ENCODE measurements at regions of chr2 and their contacts with region 1.

Region 1: DNA sequence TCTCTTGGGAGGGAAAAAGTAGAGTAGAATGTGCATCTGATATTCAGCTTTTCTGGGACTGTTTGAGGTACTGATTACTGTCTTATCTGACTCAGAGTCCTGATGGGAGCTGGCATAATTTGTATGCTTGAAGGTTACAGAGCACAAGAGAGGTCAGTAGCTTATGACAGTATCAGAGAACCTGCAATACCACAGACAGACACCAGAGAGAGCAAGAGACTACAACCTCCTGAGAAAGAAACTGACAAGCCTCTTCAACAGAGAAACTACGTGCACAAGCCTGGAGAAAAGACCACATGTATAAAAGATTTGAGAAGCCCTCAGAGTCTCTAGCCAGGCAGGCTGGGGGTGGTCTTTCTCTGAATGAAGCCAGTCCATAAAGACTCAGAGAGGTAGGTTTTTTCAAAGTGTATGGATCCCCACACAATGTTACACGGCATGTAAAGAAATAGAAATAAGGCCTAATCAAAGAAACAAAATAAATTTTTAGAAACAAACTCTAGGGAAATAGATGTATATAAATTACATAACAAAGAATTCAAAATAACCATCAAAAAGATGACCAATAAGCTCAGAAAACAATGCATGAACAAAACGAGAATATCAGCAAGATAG is 568.3 kb downstream of the LRRTM4 start:
- DNase-seq: peak; percentile 68
- ATAC-seq: peak; percentile 98
- H3K4me3 ChIP-seq: no peak overlapping the region
- H3K27ac ChIP-seq: no peak overlapping the region
- H3K4me1 ChIP-seq: no peaks in the 10 kb centered on the region
- H3K27me3 ChIP-seq: no peaks in the 10 kb centered on the region
- CTCF ChIP-seq: peak; percentile 88
- EP300 ChIP-seq: no peak
- POLR2A ChIP-seq: no peak
- RAD21 ChIP-seq: peak; percentile 81

Region 2: GRCh38 chr2:76584474-76584873 is 369.4 kb before region 1 on chr2:
- CTCF ChIA-PET with region 1: no interaction called
- POLR2A ChIA-PET with region 1: no interaction called
- in situ Hi-C with region 1: no loop called
- intact Hi-C with region 1: no loop called
- DNase-seq: no peak
- ATAC-seq: no peak
- H3K4me3 ChIP-seq: no peak overlapping the region
- H3K27ac ChIP-seq: no peak overlapping the region
- H3K4me1 ChIP-seq: no peaks in the 10 kb centered on the region
- H3K27me3 ChIP-seq: no peaks in the 10 kb centered on the region
- CTCF ChIP-seq: no peak
- EP300 ChIP-seq: no peak
- POLR2A ChIP-seq: no peak
- RAD21 ChIP-seq: no peak

Region 3: DNA sequence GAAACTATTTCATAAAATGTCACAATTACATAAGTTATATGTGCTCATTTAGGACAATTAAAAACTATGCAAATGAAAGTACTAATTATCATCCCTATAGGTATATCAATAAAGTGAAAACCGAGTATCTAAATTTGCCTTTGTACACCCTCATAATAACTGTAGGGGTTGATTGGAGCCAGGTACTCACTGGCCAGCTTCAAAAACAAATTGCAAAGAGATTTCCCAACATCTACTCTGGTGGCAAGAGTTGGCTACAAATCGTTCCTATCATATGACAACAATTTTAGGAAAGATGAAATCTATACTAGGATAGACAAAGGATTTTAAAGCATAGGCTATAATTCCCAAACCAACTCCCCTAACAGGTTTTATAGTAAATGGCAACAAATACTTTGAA is 11.9 kb after region 1 on chr2:
- CTCF ChIA-PET with region 1: no interaction called
- POLR2A ChIA-PET with region 1: no interaction called
- in situ Hi-C with region 1: no loop called
- intact Hi-C with region 1: no loop called
- DNase-seq: no peak
- ATAC-seq: no peak
- H3K4me3 ChIP-seq: no peak overlapping the region
- H3K27ac ChIP-seq: no peak overlapping the region
- H3K4me1 ChIP-seq: no peaks in the 10 kb centered on the region
- H3K27me3 ChIP-seq: no peaks in the 10 kb centered on the region
- CTCF ChIP-seq: no peak
- EP300 ChIP-seq: no peak
- POLR2A ChIP-seq: no peak
- RAD21 ChIP-seq: no peak

Region 4: DNA sequence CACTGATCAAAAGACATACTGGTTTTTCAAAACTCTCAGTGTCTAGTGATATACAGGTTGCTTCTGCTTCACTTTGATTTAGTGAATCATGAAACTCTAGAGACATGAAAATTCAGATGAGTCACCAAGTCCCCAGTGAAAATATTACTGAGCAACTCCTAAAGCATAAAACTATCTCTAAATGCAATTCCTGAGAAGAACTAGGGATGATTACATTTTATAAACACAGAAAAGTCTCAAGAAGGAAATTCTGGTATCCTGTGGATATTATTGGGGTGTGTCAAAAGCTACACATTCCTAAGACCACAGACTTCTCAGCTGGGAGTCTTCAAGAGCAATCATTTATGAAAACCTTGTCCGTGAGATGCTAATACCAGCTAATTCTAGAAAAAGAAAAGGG is 558.7 kb after region 1 on chr2:
- CTCF ChIA-PET with region 1: no interaction called
- POLR2A ChIA-PET with region 1: no interaction called
- in situ Hi-C with region 1: no loop called
- intact Hi-C with region 1: loop called (anchors 10 kb)
- DNase-seq: no peak
- ATAC-seq: no peak
- H3K4me3 ChIP-seq: no peak overlapping the region
- H3K27ac ChIP-seq: no peak overlapping the region
- H3K4me1 ChIP-seq: no peaks in the 10 kb centered on the region
- H3K27me3 ChIP-seq: no peaks in the 10 kb centered on the region
- CTCF ChIP-seq: no peak
- EP300 ChIP-seq: no peak
- POLR2A ChIP-seq: no peak
- RAD21 ChIP-seq: no peak

Region 5: GRCh38 chr2:77977471-77978063 is 1023.7 kb after region 1 on chr2:
- CTCF ChIA-PET with region 1: no interaction called
- POLR2A ChIA-PET with region 1: no interaction called
- in situ Hi-C with region 1: no loop called
- intact Hi-C with region 1: loop called (anchors 5 kb)
- DNase-seq: no peak
- ATAC-seq: peak; percentile 58
- H3K4me3 ChIP-seq: no peak overlapping the region
- H3K27ac ChIP-seq: no peak overlapping the region
- H3K4me1 ChIP-seq: no peaks in the 10 kb centered on the region
- H3K27me3 ChIP-seq: no peaks in the 10 kb centered on the region
- CTCF ChIP-seq: peak; percentile 23
- EP300 ChIP-seq: no peak
- POLR2A ChIP-seq: no peak
- RAD21 ChIP-seq: no peak

Region 6: DNA sequence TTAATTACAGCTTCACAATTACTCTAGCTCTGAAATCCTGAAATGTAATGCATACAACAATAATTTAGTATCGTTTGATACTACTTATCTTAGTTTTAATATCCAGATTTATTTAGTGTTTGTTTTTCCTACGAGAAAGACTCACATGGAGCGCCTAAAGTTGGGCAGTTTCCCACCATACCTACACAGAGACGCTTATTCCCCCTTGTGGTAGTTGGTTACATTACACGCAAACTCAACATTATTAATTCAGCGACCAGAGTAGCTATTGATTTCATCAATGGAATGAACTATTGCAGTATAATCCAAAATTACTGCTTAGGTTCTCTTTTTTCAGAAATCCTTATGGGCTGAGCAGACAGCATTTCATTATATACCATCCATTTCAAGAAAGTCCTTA is 1907.7 kb after region 1 on chr2:
- CTCF ChIA-PET with region 1: interaction called, 5 read pairs
- POLR2A ChIA-PET with region 1: no interaction called
- in situ Hi-C with region 1: loop called (anchors 25 kb)
- intact Hi-C with region 1: loop called (anchors 1 kb)
- DNase-seq: peak; percentile 51
- ATAC-seq: peak; percentile 94
- H3K4me3 ChIP-seq: no peak overlapping the region
- H3K27ac ChIP-seq: no peak overlapping the region
- H3K4me1 ChIP-seq: no peaks in the 10 kb centered on the region
- H3K27me3 ChIP-seq: 0 out of 5 replicates have a peak, but pooled peaks cover 0 to 3% of the 10 kb centered on the region in 2 experiments
- CTCF ChIP-seq: peak; percentile 71
- EP300 ChIP-seq: no peak
- POLR2A ChIP-seq: no peak
- RAD21 ChIP-seq: peak; percentile 32; the same call in 1 of the 2 replicates